ENCODE measurements at regions of chr4 and their contacts with region 1.

Region 1: DNA sequence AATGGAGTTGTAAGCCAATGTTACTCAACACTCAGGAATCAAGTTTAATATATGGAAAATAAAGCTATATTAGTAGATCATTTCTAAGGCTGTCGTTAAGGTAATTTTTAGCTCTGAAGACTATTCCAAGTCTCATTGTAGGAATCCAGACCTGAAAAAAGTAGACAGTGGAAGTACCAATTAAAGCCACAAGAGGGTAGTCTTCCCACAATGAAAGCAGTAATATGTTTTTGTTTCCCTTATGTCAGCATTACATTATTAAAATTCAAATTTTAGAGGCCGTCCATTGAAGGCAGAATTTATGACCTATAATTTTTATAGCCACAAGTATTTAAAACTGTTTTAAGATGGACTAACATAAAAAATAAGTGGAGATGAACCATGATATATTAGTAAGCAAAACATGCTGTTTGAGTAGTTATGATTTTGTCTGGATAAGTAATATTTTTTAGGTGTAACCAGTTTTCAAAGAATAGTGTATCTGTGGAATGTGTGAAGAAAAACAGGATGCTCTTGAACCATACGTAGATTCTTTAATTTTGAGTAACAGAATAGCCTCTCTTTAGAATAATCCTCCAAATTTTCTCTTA is 372.6 kb upstream of the TECRL start:
- DNase-seq: no peak
- H3K4me3 Mint-ChIP-seq: no peak overlapping the region
- H3K27ac Mint-ChIP-seq: no peak overlapping the region
- H3K4me1 Mint-ChIP-seq: no peaks in the 10 kb centered on the region
- H3K27me3 Mint-ChIP-seq: no peaks in the 10 kb centered on the region

Region 2: GRCh38 chr4:64969081-64969480 is 187.2 kb after region 1 on chr4:
- CTCF ChIA-PET with region 1: no interaction called
- POLR2A ChIA-PET with region 1: no interaction called
- intact Hi-C with region 1: loop called (anchors 5 kb)
- DNase-seq: no peak
- H3K4me3 Mint-ChIP-seq: no peak overlapping the region
- H3K27ac Mint-ChIP-seq: no peak overlapping the region
- H3K4me1 Mint-ChIP-seq: no peaks in the 10 kb centered on the region
- H3K27me3 Mint-ChIP-seq: no peaks in the 10 kb centered on the region

Measured in activated CD4-positive, alpha-beta memory T cell treated with anti-CD3 and anti-CD28 coated beads for 36 hours (primary cell).